ENCODE measurements at regions of chrX and their contacts with region 1.

Region 1: GRCh38 chrX:102950908-102951866 is 14.1 kb downstream of the RAB40AL start:
- DNase-seq: no peak
- H3K4me3 ChIP-seq: no peak overlapping the region
- H3K27me3 ChIP-seq: no peaks in the 10 kb centered on the region
- CTCF ChIP-seq: peak; percentile 66

Region 2: GRCh38 chrX:103017542-103017941 is 66.4 kb after region 1 on chrX:
- CTCF ChIA-PET with region 1: interaction called, 22 read pairs
- POLR2A ChIA-PET with region 1: no interaction called
- DNase-seq: no peak
- H3K4me3 ChIP-seq: no peak overlapping the region
- H3K27me3 ChIP-seq: no peaks in the 10 kb centered on the region
- CTCF ChIP-seq: peak; percentile 38

Region 3: DNA sequence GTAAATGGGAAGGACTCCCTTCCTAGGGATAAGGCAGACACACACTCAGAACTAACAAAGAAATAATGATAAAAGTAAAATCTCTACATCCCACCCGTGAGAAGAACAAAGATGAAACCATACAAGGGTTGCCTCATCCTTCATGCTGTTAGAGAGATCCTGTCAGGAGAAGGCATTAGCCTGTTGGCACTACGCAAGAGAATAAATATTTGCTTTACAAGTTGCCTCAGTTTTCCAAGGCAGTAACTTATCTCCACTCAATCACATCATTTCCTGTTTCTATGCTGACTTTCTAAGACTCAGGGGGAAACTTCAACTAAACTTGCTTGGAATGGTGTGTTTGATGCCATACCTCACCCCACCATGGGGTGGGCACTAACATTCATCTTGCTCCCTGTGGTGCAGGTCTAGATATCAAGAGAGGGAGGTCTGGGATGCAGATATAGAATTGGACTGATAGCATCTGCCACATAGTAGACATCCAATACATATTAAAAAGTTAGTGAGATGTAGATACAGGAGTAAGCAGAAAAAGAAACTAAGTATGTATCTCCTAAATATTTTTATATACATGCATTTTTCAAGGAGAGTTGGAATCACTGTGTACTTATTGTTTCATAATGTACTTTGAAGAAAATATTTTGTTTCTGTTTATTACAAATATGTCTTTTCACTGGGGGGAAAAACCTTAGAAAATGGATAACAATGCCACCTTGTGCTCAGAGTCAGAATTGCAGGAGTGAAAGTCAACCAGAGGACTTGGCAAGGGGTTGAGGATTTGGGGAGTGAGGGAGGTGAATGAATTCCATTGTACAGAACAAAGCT is 206.5 kb after region 1 on chrX:
- CTCF ChIA-PET with region 1: interaction called, 27 read pairs
- POLR2A ChIA-PET with region 1: no interaction called
- DNase-seq: no peak
- H3K4me3 ChIP-seq: no peak overlapping the region
- H3K27me3 ChIP-seq: no peaks in the 10 kb centered on the region
- CTCF ChIP-seq: peak; percentile 64

Region 4: DNA sequence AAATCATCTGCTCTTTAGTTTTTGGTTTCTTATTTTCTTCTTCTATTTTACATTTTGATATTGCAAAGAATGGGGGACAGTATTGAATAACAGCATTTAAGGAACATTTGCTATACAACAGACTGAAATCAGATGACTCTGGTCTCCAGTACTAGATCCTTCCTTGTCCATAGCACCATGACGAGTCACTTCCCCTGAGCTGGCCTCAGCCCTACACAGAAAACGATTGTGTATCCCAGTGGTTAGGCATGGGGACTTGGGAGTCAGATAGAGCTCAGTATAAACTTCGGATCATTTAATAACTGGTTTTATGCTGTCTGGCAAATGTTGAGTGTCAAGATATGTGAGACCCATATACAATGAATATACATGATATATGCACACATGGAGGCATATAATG is 219.0 kb after region 1 on chrX:
- CTCF ChIA-PET with region 1: interaction called, 39 read pairs
- POLR2A ChIA-PET with region 1: no interaction called
- DNase-seq: no peak
- H3K4me3 ChIP-seq: no peak overlapping the region
- H3K27me3 ChIP-seq: no peaks in the 10 kb centered on the region; the same call in 1 of the 2 replicates
- CTCF ChIP-seq: no peak

Region 5: GRCh38 chrX:103175944-103176753 is 225.0 kb after region 1 on chrX:
- CTCF ChIA-PET with region 1: interaction called, 39 read pairs
- POLR2A ChIA-PET with region 1: interaction called, 3 read pairs
- DNase-seq: no peak
- H3K4me3 ChIP-seq: no peak overlapping the region; the same call in 1 of the 2 replicates
- H3K27me3 ChIP-seq: no peaks in the 10 kb centered on the region; the same call in 1 of the 2 replicates
- CTCF ChIP-seq: peak; percentile 72

Measured in BJ (cell line).